Activated T-helper 1 cell treated with anti-CD3 and anti-CD28 coated beads, Interleukin-12 subunit alpha, Interleukin-12 subunit beta, Interleukin-2, Interleukin-4 antibody, amounts not matched to agents 30 ng/mL and 10 ng/mL and 1 ng/mL, durations not matched to agents 14 hours and 24 hours and 36 hours (primary cell): ENCODE measurements at regions of chr12 and their contacts with region 1.

Region 1: GRCh38 chr12:26126340-26127284 is 1.8 kb upstream of the BHLHE41 start:
- DNase-seq: peak; percentile 6
- H3K4me3 Mint-ChIP-seq: peak overlapping the region; percentile 81
- H3K27ac Mint-ChIP-seq: no peak overlapping the region
- H3K4me1 Mint-ChIP-seq: peaks cover 36% of the 10 kb centered on the region
- H3K27me3 Mint-ChIP-seq: peaks cover 71% of the 10 kb centered on the region

Region 2: GRCh38 chr12:25639406-25639805 is 487.2 kb before region 1 on chr12:
- intact Hi-C with region 1: no loop called
- DNase-seq: no peak
- H3K4me3 Mint-ChIP-seq: no peak overlapping the region
- H3K27ac Mint-ChIP-seq: no peak overlapping the region
- H3K4me1 Mint-ChIP-seq: no peaks in the 10 kb centered on the region
- H3K27me3 Mint-ChIP-seq: peaks cover 9% of the 10 kb centered on the region

Region 3: GRCh38 chr12:25958428-25959070 is 168.1 kb before region 1 on chr12 and contains the start of gene RASSF8:
- intact Hi-C with region 1: loop called (anchors 5 kb)
- DNase-seq: peak; percentile 1
- H3K4me3 Mint-ChIP-seq: peak within 1 kb of the TSS; percentile 81
- H3K27ac Mint-ChIP-seq: peak within 1 kb of the TSS; percentile 56
- H3K4me1 Mint-ChIP-seq: peaks cover 13% of the 10 kb centered on the region
- H3K27me3 Mint-ChIP-seq: peaks cover 67% of the 10 kb centered on the region
- total RNA-seq, gene RASSF8: 0.12 and 0.13 TPM in 2 replicates

Region 4: DNA sequence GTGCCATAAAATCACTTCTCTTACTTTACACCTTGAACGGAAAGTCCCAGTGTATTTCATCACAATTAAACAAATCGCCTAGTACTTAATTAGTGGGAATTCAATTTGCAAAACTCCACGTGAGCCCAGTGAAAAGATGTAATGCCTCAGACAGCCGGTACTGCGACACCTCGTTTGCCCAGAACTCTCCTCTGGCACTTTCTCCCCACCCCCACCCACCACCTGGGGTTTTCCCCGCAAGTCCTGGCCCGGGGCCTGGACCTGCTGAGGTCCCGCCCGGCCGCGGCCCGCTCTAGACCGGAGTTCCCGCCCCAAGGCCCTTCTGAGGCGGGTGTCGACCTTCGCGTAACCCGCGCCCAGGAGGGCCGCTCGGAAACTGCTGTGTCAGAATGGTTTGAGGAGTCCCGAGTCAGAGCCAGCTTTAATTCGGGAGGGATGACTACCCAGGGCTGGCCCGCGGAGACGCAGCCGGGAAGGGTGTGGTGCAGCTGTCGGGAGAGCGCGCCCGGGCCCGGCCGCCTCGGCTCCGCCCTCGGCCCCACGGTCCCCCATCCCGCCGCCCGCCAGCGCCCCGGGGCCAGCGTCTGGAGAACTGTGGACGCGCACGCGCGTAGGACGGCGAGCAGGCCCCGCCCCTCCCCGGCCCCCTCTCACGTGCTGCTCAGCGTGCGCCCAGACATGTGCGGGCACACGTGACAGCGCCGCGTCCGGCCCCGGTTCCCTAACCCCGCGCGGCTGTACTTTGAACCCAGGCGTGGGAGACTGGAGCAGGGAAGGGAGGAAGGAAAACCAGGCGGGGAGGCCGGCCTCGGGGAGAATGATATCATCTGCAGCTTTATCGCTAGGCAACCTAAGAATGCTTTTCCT is 12.5 kb before region 1 on chr12:
- intact Hi-C with region 1: loop called (anchors 1 kb)
- DNase-seq: peak; percentile 37
- H3K4me3 Mint-ChIP-seq: peak overlapping the region; percentile 76
- H3K27ac Mint-ChIP-seq: no peak overlapping the region
- H3K4me1 Mint-ChIP-seq: peaks cover 5% of the 10 kb centered on the region
- H3K27me3 Mint-ChIP-seq: peaks cover 72% of the 10 kb centered on the region

Region 5: GRCh38 chr12:26195641-26196420 is 69.2 kb after region 1 on chr12:
- intact Hi-C with region 1: no loop called
- DNase-seq: no peak
- H3K4me3 Mint-ChIP-seq: peak overlapping the region; percentile 66
- H3K27ac Mint-ChIP-seq: no peak overlapping the region
- H3K4me1 Mint-ChIP-seq: no peaks in the 10 kb centered on the region
- H3K27me3 Mint-ChIP-seq: peaks cover 58% of the 10 kb centered on the region

Region 6: DNA sequence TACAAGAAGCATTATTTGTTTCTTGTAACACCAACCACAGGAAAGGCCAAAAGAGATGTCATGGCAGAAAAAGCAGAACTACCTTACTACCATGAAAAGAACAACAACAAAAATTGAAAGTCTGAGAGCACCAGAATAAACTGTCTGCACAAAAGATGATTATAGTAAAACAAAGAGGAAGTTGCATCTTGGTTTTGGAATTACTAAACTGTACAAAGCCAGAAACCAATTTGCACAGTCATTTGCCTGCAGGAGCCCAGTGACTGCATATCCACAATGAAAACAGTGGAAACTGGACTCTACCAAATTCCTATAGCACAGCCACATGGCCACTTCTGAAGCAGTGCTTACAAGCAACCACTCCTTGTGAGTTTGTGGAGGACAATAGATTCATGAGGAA is 344.9 kb after region 1 on chr12:
- intact Hi-C with region 1: loop called (anchors 5 kb)
- DNase-seq: no peak
- H3K4me3 Mint-ChIP-seq: no peak overlapping the region
- H3K27ac Mint-ChIP-seq: peak overlapping the region; percentile 64
- H3K4me1 Mint-ChIP-seq: peaks cover 36% of the 10 kb centered on the region
- H3K27me3 Mint-ChIP-seq: no peaks in the 10 kb centered on the region

Region 7: DNA sequence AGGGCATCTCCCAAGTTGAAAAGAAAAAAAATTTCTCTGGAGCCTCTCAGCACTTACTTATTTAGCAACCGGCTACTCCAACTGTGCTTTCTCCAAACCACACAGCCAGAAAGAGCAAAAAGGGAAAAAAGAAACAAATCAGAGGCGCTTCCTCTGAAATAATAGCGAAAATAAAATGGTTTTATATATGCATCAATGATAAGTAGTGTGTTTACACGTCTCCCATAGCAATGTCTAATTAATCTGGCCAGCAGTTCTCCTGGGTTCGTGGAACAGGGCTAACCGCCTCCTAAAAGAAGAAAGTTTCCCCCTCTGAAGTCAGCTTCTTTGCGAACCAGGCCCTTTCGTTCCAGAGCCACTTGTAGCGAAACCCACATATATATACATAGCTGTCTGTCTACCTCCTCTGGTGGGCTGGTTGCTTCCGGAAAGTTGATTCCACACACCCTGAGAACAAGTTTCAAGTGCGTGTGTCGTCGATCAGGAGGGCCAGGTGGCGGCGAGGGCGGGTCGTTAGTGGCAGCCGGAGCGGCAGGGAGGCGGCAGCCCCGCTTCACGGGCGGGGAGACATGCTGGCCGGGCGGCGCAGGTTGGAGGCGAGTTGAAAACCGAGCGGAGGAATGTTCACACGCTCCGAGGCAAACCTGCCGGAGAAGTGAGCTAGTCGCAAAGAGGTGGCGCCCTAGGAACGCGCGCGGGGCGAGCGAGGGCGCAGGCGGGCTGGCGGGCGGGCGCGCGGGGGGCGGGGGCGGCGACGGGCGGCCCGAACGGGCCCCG is 1843.2 kb after region 1 on chr12:
- intact Hi-C with region 1: loop called (anchors 10 kb)
- DNase-seq: no peak
- H3K4me3 Mint-ChIP-seq: peak overlapping the region; percentile 72
- H3K27ac Mint-ChIP-seq: peak overlapping the region; percentile 53
- H3K4me1 Mint-ChIP-seq: peaks cover 20% of the 10 kb centered on the region
- H3K27me3 Mint-ChIP-seq: peaks cover 89% of the 10 kb centered on the region